Ovary (tissue), 10 donors: ENCODE measurements at regions of chr11 and their contacts with region 1.

Region 1: GRCh38 chr11:68792400-68792966 is 41.2 kb upstream of the TESMIN start:
- DNase-seq: no peak
- H3K4me3 ChIP-seq: no peak overlapping the region
- H3K27ac ChIP-seq: no peak overlapping the region
- H3K4me1 ChIP-seq: no peaks in the 10 kb centered on the region
- H3K27me3 ChIP-seq: no peaks in the 10 kb centered on the region
- CTCF ChIP-seq: no peak
- EP300 ChIP-seq: no peak
- POLR2A ChIP-seq: no peak

Region 2: DNA sequence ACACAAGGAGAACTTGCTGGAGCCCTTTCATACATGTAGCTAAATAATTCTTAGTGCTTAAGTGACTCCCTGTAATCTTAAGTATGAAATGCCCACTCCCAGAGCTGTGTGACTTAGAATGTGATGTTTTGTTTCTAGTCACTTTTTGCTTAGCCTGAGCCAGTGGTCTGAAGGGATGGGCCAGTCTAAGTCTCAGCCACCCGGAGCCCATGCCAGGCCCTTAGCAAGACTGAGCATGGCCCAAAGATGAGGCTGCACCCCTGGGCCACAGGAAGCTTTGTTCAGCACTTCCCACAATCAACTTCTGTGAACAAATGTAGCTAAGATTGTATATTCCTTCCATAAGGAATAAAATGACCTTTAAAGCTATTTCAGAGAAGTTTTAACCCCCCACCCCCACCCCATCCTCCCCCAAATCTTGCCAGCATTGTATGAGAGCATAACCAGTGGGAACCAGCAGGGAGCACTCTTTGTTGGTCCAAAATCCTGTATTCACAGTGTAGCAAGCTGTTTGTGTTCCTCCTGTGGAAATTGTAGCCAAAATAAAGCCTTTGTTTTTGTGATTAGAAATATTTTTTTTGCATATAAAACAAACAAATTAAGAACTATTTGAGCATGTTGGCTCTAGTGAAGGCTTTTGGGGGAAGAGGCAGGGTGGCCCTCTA is 181.9 kb before region 1 on chr11:
- intact Hi-C with region 1: no loop called
- DNase-seq: no peak
- H3K4me3 ChIP-seq: no peak overlapping the region
- H3K27ac ChIP-seq: no peak overlapping the region
- H3K4me1 ChIP-seq: peaks cover 6% of the 10 kb centered on the region
- H3K27me3 ChIP-seq: no peaks in the 10 kb centered on the region
- CTCF ChIP-seq: no peak
- EP300 ChIP-seq: no peak
- POLR2A ChIP-seq: no peak

Region 3: DNA sequence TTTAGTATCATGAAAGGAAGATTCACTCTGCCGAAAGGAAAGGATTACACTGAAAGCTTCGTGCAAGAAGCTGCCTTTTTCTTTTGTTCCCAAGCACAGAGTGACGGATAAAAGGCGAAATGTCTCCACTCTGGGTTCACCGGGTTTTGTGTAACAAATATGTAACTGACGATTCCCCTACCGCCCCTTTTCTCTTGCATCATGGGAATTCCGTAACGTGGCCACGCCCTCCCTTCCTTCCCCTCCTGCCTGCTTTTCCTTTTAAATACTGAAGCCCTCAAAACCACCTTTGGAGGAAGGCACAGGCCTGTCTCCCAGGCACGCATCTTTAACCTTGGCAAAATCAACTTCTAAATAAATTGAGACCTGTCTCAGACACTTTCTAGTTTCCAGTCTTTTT is 24.8 kb before region 1 on chr11:
- intact Hi-C with region 1: loop called in 1 of 4 experiments (anchors 2 kb)
- DNase-seq: no peak
- H3K4me3 ChIP-seq: no peak overlapping the region
- H3K27ac ChIP-seq: no peak overlapping the region
- H3K4me1 ChIP-seq: no peaks in the 10 kb centered on the region
- H3K27me3 ChIP-seq: no peaks in the 10 kb centered on the region
- CTCF ChIP-seq: no peak
- EP300 ChIP-seq: no peak
- POLR2A ChIP-seq: no peak